Esophagus muscularis mucosa (tissue), 4 donors: ENCODE measurements at regions of chr2 and their contacts with region 1.

Region 1: DNA sequence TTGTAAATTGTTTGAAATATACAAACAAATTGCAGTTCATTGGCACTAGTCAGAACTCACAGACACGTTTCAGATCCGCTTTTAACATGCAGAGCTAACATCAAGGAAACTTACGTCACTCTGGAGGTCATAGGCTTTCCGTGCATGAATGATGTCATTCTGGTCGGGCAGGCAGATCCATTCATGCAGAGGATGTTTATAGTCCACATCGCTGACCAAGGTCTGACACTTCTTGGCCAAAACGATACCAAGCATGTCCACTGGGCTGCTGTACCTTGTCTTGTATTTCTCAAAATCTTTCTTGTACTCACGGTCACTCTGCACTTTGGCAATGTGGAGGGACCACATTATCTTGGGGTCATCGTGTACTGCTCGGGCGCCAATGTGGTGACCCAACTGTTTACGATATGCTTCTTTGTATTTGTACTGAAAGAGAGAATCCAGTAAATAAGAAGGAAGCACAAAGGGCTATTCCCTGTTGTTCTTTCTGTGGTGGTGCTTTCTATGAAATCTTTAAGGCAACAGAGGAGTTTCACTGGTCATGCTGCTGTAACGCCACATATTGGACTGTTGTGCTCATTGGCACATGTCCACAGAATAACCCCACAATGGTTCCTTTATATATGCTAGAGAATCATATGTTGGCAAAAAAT is 114.8 kb downstream of the NEB start:
- DNase-seq: no peak
- H3K4me3 ChIP-seq: no peak overlapping the region
- H3K27ac ChIP-seq: no peak overlapping the region
- H3K4me1 ChIP-seq: no peaks in the 10 kb centered on the region
- H3K27me3 ChIP-seq: no peaks in the 10 kb centered on the region
- CTCF ChIP-seq: no peak
- EP300 ChIP-seq: no peak
- POLR2A ChIP-seq: no peak

Region 2: GRCh38 chr2:151071382-151071781 is 548.1 kb before region 1 on chr2:
- intact Hi-C with region 1: no loop called
- DNase-seq: no peak
- H3K4me3 ChIP-seq: no peak overlapping the region
- H3K27ac ChIP-seq: no peak overlapping the region
- H3K4me1 ChIP-seq: no peaks in the 10 kb centered on the region
- H3K27me3 ChIP-seq: no peaks in the 10 kb centered on the region
- CTCF ChIP-seq: peak in 1 of 3 experiments; percentile 39
- EP300 ChIP-seq: no peak
- POLR2A ChIP-seq: no peak

Region 3: DNA sequence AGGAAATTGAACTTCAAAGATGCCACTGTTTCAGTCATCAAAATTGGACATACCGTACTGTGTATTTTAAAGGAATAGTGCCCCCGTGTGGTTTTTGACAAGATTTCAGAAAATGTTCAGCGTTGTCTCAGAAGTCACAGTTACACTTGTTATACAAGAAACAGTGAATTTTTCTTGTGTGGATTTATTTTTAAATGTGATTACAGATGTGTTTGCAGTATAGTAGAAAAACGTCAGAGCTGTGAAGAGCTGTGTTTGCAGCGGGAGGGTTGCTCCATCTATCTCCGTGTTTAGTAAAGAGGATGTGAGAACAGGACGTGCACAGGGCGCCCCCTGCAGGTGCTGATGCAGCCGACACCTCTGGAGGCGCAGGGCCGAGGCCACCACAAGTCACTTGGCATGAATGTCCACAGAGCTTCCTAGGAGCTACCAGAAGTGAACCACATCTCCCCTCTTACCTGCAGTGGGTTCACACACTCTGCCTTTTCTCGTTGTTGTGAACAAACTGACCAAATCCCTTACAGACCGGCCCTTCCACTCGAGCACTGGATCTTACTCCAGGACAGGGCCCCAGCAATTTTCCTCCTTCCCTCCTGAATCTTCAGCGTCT is 406.3 kb after region 1 on chr2:
- intact Hi-C with region 1: loop called (anchors 10 kb)
- DNase-seq: peak; percentile 97
- H3K4me3 ChIP-seq: peak overlapping the region; percentile 36 to 59 (median 41)
- H3K27ac ChIP-seq: no peak overlapping the region
- H3K4me1 ChIP-seq: peaks cover 0 to 5% (median 0%) of the 10 kb centered on the region in 4 donors
- H3K27me3 ChIP-seq: no peaks in the 10 kb centered on the region
- CTCF ChIP-seq: peak in 2 of 3 experiments; percentile 95 to 96
- EP300 ChIP-seq: no peak
- POLR2A ChIP-seq: no peak

Region 4: GRCh38 chr2:152219077-152219828 is 599.8 kb after region 1 on chr2:
- intact Hi-C with region 1: no loop called
- DNase-seq: no peak
- H3K4me3 ChIP-seq: no peak overlapping the region
- H3K27ac ChIP-seq: no peak overlapping the region
- H3K4me1 ChIP-seq: peaks cover 11 to 27% (median 20%) of the 10 kb centered on the region in 4 donors
- H3K27me3 ChIP-seq: no peaks in the 10 kb centered on the region
- CTCF ChIP-seq: no peak
- EP300 ChIP-seq: no peak
- POLR2A ChIP-seq: no peak